ENCODE measurements at regions of chr19 and their contacts with region 1.

Region 1: GRCh38 chr19:28633319-28634018 is 579.5 kb downstream of the UQCRFS1 start:
- DNase-seq: peak; percentile 74
- ATAC-seq: peak; percentile 77
- H3K4me3 Mint-ChIP-seq: no peak overlapping the region
- H3K27ac Mint-ChIP-seq: no peak overlapping the region
- H3K4me1 Mint-ChIP-seq: no peaks in the 10 kb centered on the region
- H3K27me3 Mint-ChIP-seq: no peaks in the 10 kb centered on the region

Region 2: DNA sequence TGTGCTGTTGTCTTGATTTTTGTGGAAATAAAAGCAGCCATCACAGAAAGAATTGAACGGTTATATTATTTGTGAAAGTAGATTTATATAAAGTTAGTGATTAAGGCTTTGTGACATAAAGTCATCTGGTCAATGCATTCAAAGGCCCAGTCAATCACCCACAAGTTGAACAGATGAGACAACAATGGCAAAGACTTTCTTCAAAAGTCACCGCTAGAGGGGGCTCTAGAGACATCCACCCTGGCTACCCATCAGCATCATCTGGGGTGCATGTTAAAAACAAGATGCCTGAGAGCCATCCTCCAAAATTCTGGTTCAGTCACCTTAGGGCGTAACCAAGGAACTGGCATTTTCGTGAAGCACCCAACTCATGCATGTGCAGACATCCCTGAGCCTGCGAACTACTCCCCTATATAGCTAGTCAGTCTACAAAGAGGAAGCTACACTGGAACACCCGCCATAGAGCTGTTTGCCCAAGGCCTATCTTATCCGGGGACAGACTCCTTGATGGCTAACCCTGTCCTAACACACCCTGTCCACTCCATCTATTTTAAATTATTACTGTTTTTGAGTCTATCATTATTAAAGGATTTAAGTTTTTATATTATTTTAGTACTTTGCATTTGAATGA is 391.1 kb before region 1 on chr19:
- CTCF ChIA-PET with region 1: no interaction called
- POLR2A ChIA-PET with region 1: no interaction called
- intact Hi-C with region 1: loop called in 1 of 2 experiments (anchors 5 kb)
- DNase-seq: peak; percentile 42
- ATAC-seq: no peak
- H3K4me3 Mint-ChIP-seq: no peak overlapping the region
- H3K27ac Mint-ChIP-seq: no peak overlapping the region
- H3K4me1 Mint-ChIP-seq: no peaks in the 10 kb centered on the region
- H3K27me3 Mint-ChIP-seq: no peaks in the 10 kb centered on the region

Region 3: GRCh38 chr19:28466107-28467045 is 167.1 kb before region 1 on chr19:
- CTCF ChIA-PET with region 1: interaction called, 20 read pairs
- POLR2A ChIA-PET with region 1: no interaction called
- intact Hi-C with region 1: loop called (anchors 1 kb)
- DNase-seq: peak; percentile 84
- ATAC-seq: no peak
- H3K4me3 Mint-ChIP-seq: no peak overlapping the region
- H3K27ac Mint-ChIP-seq: no peak overlapping the region
- H3K4me1 Mint-ChIP-seq: peaks cover 23% of the 10 kb centered on the region
- H3K27me3 Mint-ChIP-seq: peaks cover 3% of the 10 kb centered on the region

Region 4: DNA sequence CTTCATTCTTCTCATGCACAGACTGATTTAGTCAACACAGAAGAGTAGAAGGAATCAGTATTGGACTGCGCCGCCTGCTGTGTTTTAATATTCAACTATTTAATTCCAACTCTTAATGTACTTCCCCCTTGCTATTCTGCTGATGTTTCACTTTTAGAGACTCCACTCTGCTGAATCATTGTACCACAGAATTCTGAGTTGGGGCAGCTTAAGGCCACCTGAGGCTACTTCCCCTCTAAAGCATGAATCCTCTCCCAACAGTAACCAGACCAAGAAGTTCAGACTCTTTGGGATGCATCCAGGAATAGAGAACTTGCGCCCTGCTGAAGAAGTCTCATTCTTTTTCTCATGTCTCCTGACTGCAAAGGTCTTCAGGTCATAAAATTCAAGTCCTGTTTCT is 129.3 kb before region 1 on chr19:
- CTCF ChIA-PET with region 1: no interaction called
- POLR2A ChIA-PET with region 1: no interaction called
- intact Hi-C with region 1: no loop called
- DNase-seq: no peak
- ATAC-seq: no peak
- H3K4me3 Mint-ChIP-seq: no peak overlapping the region
- H3K27ac Mint-ChIP-seq: no peak overlapping the region
- H3K4me1 Mint-ChIP-seq: peaks cover 15% of the 10 kb centered on the region
- H3K27me3 Mint-ChIP-seq: no peaks in the 10 kb centered on the region

Region 5: DNA sequence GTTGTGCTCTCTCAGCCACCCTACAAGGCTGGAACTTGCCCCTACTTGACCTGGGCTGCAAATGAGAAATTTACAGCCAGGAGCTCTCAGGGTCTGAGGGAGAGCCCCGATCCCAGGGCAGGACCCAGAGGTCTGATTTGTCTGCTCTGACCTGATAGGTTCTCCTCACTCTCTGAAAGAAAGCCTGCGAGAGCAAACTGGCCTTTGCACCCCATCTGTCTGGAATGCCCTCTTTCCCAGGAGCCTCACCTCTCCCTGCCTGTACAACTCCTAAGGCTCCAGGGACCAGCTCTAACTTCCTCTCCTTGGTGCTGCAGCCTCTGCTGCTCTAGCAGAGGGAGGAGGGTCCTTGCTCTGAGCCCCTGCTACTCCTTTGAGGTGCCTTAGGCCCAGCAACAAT is 441.7 kb after region 1 on chr19:
- CTCF ChIA-PET with region 1: no interaction called
- POLR2A ChIA-PET with region 1: interaction called, 12 read pairs
- intact Hi-C with region 1: no loop called
- DNase-seq: no peak
- ATAC-seq: no peak
- H3K4me3 Mint-ChIP-seq: no peak overlapping the region
- H3K27ac Mint-ChIP-seq: no peak overlapping the region
- H3K4me1 Mint-ChIP-seq: no peaks in the 10 kb centered on the region
- H3K27me3 Mint-ChIP-seq: peaks cover under 1% of the 10 kb centered on the region